ENCODE measurements at regions of chr6 and their contacts with region 1.

Region 1: GRCh38 chr6:106325336-106326178 is at the start of gene ATG5:
- DNase-seq: peak; percentile 100
- ATAC-seq: peak; percentile 96
- H3K4me3 Mint-ChIP-seq: peak within 1 kb of the TSS; percentile 99
- H3K27ac Mint-ChIP-seq: peak within 1 kb of the TSS; percentile 98
- H3K4me1 Mint-ChIP-seq: peaks cover 39% of the 10 kb centered on the region
- H3K27me3 Mint-ChIP-seq: peaks cover 8% of the 10 kb centered on the region
- total RNA-seq, gene ATG5: 27.2 to 31.6 TPM

Region 2: DNA sequence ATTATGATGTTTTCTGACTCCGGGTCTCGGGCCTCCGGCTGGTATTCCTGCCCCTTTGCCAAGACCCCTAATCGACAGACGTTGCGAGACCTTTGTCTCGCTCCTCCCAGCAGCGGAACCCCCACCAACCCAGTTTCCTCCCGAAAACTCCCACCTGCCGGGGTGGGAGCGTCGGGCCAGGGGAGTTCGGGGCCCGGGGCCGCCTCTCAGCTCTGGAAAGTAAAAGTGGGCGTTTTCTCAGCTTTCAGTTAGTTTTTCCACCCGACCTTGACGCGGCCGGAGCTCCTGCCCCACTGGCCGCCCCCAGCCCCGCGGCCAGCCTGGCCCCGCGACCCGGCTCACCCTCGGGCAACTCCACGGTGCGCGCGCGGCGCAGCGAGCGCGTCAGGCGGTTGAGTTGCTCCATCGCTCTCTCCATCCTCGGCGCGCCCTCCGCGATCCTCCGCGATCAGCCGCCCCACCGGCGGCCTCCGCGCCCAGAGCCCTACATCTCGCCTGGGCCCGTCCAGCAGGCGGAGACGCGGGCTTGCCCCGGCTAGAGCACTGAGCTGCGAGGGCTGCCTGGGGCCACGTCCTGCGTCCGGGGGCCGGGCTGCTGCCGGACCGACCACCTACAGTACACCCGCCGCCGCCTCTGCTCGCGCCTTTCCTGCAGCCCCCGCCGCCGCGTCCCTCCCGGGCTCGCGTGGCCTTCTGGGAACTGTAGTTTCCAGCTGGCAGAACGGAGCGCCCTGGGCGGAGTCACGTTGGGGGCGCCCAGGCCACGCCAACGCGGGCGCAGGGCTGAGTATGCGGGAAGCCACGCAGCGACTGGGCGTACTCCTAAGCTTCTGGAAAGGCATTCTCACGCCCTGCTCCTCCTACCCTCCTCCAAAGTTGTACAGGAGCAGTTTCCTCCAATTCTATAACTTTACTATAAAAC is 1466.1 kb before region 1 on chr6 and contains the start of gene HACE1:
- CTCF ChIA-PET with region 1: no interaction called
- POLR2A ChIA-PET with region 1: no interaction called
- intact Hi-C with region 1: loop called in 1 of 2 experiments (anchors 1 kb)
- DNase-seq: peak; percentile 94
- ATAC-seq: peak; percentile 99
- H3K4me3 Mint-ChIP-seq: peak within 1 kb of the TSS; percentile 90
- H3K27ac Mint-ChIP-seq: peak within 1 kb of the TSS; percentile 90
- H3K4me1 Mint-ChIP-seq: peaks cover 19% of the 10 kb centered on the region
- H3K27me3 Mint-ChIP-seq: peaks cover 3% of the 10 kb centered on the region
- total RNA-seq, gene HACE1: 12.1 to 15.7 TPM

Region 3: DNA sequence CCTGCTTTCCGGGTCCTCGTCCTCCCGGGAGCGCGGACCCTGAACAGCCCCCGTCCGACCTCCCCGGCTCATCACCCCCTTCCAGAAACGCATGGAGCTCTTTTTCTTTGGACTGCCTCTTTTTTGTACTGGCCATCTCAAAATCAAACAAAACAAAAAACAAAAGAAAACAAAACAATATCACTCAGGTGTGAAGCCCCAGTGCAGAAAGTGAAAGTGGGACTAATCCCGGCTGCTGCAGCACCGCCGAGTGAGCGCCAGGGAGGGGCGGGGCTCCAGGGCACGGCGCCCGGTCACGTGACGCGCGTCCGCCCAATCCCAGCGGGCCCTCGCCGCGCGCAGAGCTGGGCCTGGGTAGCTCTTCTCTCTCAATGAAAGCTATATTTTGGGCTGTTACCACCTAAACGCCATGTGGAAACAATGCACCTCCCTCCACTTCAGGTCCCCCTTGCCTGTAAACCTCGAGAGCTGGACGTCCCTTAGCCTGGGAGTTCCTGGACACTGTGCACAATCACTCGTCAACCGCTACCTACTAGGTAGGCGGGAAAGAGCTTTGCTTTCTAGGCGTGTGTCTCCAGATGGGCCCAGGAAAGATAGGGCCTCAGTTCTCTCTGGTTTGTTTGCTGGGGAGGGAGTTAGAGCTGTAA is 333.1 kb before region 1 on chr6:
- CTCF ChIA-PET with region 1: no interaction called
- POLR2A ChIA-PET with region 1: no interaction called
- intact Hi-C with region 1: loop called in 1 of 2 experiments (anchors 5 kb)
- DNase-seq: peak; percentile 94
- ATAC-seq: peak; percentile 93
- H3K4me3 Mint-ChIP-seq: peak overlapping the region; percentile 88
- H3K27ac Mint-ChIP-seq: peak overlapping the region; percentile 91
- H3K4me1 Mint-ChIP-seq: peaks cover 32% of the 10 kb centered on the region
- H3K27me3 Mint-ChIP-seq: peaks cover 61% of the 10 kb centered on the region

Region 4: DNA sequence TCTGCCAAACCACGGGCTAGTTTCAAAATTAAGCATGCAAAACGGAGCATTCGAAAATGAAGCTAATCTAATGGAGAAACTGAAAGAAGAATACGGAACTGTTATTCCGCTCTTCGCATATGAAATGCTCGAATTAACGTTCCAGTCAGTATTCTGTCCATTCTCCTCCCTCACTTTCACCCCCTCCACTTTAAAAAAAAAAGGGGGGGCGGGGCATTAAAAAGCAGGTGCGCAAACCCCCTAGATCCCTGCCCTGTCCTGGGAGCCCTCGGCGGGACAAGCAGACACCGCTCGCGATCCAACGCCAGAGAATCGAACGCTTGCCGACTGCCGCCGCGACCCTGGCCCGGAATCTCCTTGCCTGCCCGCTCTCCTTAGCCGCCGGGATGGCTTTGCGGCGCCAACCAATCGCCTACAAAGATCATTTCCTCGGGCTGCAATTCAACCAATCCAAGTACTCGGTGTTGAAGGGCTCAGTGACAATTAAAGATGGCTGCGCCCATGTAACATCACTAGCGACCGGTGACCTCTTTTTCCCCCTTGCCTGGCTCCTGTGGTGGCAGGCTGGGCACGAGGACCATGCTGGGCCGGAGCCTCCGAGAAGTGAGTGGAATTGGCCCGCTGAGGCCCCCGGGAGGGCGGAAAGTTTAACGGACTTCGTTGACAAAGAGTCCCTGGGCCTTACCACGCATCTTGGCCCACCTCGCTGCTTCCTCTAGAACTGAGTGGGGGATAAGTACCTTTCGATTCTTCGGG is 303.7 kb after region 1 on chr6 and contains the starts of genes QRSL1 and RTN4IP1:
- CTCF ChIA-PET with region 1: no interaction called
- POLR2A ChIA-PET with region 1: no interaction called
- intact Hi-C with region 1: loop called in 1 of 2 experiments (anchors 1 kb)
- DNase-seq: peak; percentile 90
- ATAC-seq: peak; percentile 91
- H3K4me3 Mint-ChIP-seq: peak within 1 kb of the TSS; percentile 97
- H3K27ac Mint-ChIP-seq: peak within 1 kb of the TSS; percentile 98
- H3K4me1 Mint-ChIP-seq: peaks cover 28% of the 10 kb centered on the region
- H3K27me3 Mint-ChIP-seq: no peaks in the 10 kb centered on the region
- total RNA-seq, gene QRSL1: 15.8 to 17.9 TPM
- total RNA-seq, gene RTN4IP1: 4.8 to 9.3 TPM

Region 5: DNA sequence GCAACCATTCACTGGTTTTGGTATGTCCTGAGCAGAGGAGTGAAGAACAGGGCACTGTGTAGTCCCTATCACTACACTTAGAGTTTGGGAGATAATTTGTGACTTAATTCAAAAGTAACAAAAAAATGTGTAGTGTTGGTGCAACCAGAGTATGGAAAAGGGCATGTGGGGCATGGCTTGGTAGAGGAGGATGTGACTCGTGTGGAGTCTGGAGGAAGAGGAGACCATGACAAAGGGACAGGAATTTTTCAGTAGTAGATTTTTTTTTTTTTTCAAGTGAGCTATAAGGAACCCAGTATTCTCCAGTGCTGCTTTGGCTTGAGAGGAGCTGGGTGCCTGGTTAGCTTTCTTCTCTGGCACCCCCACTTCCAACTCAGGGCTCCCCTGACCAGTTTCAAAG is 707.6 kb after region 1 on chr6:
- CTCF ChIA-PET with region 1: no interaction called
- POLR2A ChIA-PET with region 1: no interaction called
- intact Hi-C with region 1: loop called in 1 of 2 experiments (anchors 1 kb)
- DNase-seq: no peak
- ATAC-seq: peak; percentile 7
- H3K4me3 Mint-ChIP-seq: no peak overlapping the region
- H3K27ac Mint-ChIP-seq: peak overlapping the region; percentile 28
- H3K4me1 Mint-ChIP-seq: peaks cover 39% of the 10 kb centered on the region
- H3K27me3 Mint-ChIP-seq: no peaks in the 10 kb centered on the region

Region 6: GRCh38 chr6:107114213-107114905 is 788.8 kb after region 1 on chr6:
- CTCF ChIA-PET with region 1: no interaction called
- POLR2A ChIA-PET with region 1: no interaction called
- intact Hi-C with region 1: loop called in 1 of 2 experiments (anchors 10 kb)
- DNase-seq: peak; percentile 84
- ATAC-seq: peak; percentile 62
- H3K4me3 Mint-ChIP-seq: peak overlapping the region; percentile 67
- H3K27ac Mint-ChIP-seq: peak overlapping the region; percentile 65
- H3K4me1 Mint-ChIP-seq: peaks cover 21% of the 10 kb centered on the region
- H3K27me3 Mint-ChIP-seq: peaks cover 5% of the 10 kb centered on the region